Heart left ventricle (tissue), 16 donors: ENCODE measurements at regions of chr6 and their contacts with region 1.

Region 1: GRCh38 chr6:34036357-34037069 is 109.4 kb downstream of the GRM4 start:
- DNase-seq: no peak
- ATAC-seq: no peak
- H3K4me3 ChIP-seq: no peak overlapping the region
- H3K27ac ChIP-seq: no peak overlapping the region
- H3K4me1 ChIP-seq: no peaks in the 10 kb centered on the region
- H3K27me3 ChIP-seq: peaks cover 0 to 25% (median 4%) of the 10 kb centered on the region in 9 donors
- CTCF ChIP-seq: no peak
- POLR2A ChIP-seq: no peak

Region 2: GRCh38 chr6:33840048-33840926 is 196.2 kb before region 1 on chr6:
- intact Hi-C with region 1: loop called in 1 of 10 experiments (anchors 10 kb)
- DNase-seq: peak in 3 of 5 donors; percentile 35 to 41 (median 39)
- ATAC-seq: peak in 3 of 4 donors; percentile 78 to 85 (median 84)
- H3K4me3 ChIP-seq: no peak overlapping the region
- H3K27ac ChIP-seq: peak overlapping the region in 1 of 12 donors; percentile 56
- H3K4me1 ChIP-seq: peaks cover 0 to 19% (median 2%) of the 10 kb centered on the region in 12 donors
- H3K27me3 ChIP-seq: peaks cover 0 to 6% (median 0%) of the 10 kb centered on the region in 9 donors
- CTCF ChIP-seq: no peak
- POLR2A ChIP-seq: no peak